Aorta (tissue), 5 donors: ENCODE measurements at regions of chr2 and their contacts with region 1.

Region 1: DNA sequence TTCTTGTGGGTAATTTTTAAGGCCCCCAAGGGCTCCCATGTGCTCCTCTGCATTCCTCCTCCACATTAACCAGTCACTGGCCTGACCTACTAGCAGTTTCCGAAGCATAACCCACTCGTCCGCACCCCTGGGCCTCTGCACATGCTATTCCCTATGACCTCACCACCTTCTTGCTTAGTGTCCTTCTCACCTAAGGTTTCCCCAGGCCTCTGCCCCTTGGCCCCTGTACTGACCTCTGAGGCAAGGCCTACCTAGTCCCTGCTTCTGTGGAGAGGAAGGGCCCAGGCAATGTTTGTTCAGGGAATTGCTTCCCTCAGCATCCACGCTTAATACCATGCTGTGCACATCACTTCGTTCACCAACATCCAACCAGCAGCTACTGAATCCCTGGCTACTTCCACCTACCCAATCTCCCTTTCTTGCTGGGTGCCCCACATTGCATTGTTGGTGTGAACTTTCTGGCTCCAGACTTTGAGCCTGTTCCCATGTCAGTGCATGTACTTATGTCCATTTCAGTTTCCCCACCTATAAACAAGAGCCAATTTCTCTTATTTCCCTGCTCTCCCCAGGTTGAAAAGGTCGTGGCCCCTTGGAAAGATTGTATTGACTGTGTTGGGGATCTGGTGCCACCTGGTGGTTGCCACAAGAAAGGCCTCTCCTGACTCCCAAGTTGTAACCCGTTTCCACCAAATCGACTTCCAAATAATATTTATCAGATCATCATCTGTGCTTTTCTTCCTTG is 19.2 kb upstream of the TMEM177 start:
- DNase-seq: peak in 1 of 2 donors; percentile 53
- ATAC-seq: no peak
- H3K4me3 ChIP-seq: no peak overlapping the region
- H3K27ac ChIP-seq: no peak overlapping the region
- H3K4me1 ChIP-seq: no peaks in the 10 kb centered on the region
- H3K27me3 ChIP-seq: no peaks in the 10 kb centered on the region

Region 2: DNA sequence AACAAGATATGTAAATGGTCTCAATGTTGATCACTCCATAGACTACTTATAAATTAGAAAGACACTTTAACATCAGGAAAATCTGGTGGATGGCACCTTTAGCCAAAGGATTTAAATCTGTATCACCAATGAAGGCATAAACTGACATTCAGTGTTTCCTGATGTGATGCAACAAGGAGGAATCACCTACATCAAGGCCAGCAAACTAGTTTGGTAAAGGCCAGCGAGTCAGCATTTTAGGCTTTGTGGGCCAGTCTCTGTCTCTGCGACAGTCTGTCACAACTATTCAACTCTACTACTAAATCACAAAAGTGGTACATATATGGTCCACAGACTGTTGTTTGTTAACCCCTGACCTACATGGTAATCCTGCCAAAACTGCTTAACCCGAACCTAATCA is 326.4 kb before region 1 on chr2:
- intact Hi-C with region 1: no loop called
- DNase-seq: no peak
- ATAC-seq: no peak
- H3K4me3 ChIP-seq: no peak overlapping the region
- H3K27ac ChIP-seq: no peak overlapping the region
- H3K4me1 ChIP-seq: no peaks in the 10 kb centered on the region
- H3K27me3 ChIP-seq: no peaks in the 10 kb centered on the region

Region 3: DNA sequence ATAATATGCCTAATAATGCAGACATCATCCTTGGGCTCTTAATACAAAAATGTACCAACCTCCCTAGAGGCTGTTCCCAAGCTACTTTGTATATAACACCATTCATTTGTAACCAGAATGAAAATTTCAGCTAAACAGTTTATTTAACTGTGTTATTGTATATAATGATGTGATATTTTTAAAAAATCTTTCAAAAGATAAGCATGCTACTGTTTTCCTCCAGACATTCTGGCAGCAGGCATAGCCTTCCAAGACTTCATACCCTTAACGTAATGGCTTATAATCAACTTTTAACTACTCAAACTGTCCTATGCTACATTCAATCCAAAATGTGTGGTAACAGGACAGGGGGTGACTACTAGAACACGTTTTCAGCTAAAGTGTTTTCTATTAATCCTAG is 94.3 kb before region 1 on chr2:
- intact Hi-C with region 1: no loop called
- DNase-seq: no peak
- ATAC-seq: no peak
- H3K4me3 ChIP-seq: no peak overlapping the region
- H3K27ac ChIP-seq: no peak overlapping the region
- H3K4me1 ChIP-seq: no peaks in the 10 kb centered on the region
- H3K27me3 ChIP-seq: no peaks in the 10 kb centered on the region

Region 4: GRCh38 chr2:119641562-119642258 is 18.1 kb before region 1 on chr2:
- intact Hi-C with region 1: loop called (anchors 1 kb)
- DNase-seq: peak; percentile 75 to 90
- ATAC-seq: peak; percentile 91
- H3K4me3 ChIP-seq: no peak overlapping the region
- H3K27ac ChIP-seq: no peak overlapping the region
- H3K4me1 ChIP-seq: no peaks in the 10 kb centered on the region
- H3K27me3 ChIP-seq: no peaks in the 10 kb centered on the region